ENCODE measurements at regions of chr20 and their contacts with region 1.

Region 1: GRCh38 chr20:4592316-4593148 is 129.2 kb upstream of the PRND start:
- DNase-seq: peak; percentile 32 to 78 (median 72)
- ATAC-seq: peak; percentile 83 to 92
- H3K4me3 ChIP-seq: no peak overlapping the region
- H3K27ac ChIP-seq: no peak overlapping the region
- H3K4me1 ChIP-seq: no peaks in the 10 kb centered on the region
- H3K27me3 ChIP-seq: no peaks in the 10 kb centered on the region

Region 2: DNA sequence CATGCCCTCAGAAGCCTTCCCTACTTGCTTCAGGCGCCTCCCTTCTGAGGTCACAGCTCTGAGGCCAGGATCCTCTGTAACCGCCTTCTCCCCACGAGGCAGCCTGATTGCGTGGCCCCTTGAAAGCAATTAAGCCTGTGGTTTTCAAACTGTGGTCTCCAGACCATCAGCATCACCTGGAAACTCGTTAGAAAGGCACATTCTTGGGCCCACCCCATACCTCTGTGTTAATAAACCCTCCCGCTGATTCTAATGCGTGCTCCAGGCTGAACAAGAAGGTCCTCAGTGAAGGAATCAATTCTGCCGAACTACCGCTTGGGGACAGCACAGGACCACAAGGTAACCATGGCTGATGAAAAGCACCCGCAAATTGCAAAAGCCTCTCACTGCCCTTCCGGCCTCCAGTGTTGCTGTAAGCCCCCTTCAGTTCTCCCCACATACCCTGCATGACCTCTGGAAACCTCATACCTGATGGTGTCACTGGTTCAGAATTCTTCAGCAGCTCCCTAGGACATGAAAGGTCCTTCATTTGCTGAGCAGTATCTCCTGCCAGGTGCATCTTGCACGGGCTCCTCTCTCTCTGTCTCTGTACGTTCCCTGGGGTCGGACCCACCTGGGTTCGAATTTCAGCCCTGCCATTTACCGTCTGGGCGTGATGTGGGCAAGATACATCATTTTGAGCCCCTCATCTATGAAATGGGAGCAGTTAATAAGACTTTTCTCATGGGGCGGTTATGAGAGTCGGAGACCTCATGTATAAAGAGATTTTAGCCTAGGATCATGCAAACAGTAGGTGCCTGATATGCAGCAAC is 483.8 kb before region 1 on chr20:
- intact Hi-C with region 1: loop called in 3 of 4 experiments (anchors 5 to 10 kb)
- DNase-seq: peak in 2 of 3 donors; percentile 67 to 77
- ATAC-seq: peak; percentile 83 to 85
- H3K4me3 ChIP-seq: no peak overlapping the region
- H3K27ac ChIP-seq: no peak overlapping the region
- H3K4me1 ChIP-seq: peaks cover 6% of the 10 kb centered on the region
- H3K27me3 ChIP-seq: no peaks in the 10 kb centered on the region

Region 3: GRCh38 chr20:4244700-4245485 is 347.6 kb before region 1 on chr20:
- intact Hi-C with region 1: loop called in 2 of 4 experiments (anchors 2 to 5 kb)
- DNase-seq: no peak
- ATAC-seq: no peak
- H3K4me3 ChIP-seq: no peak overlapping the region
- H3K27ac ChIP-seq: no peak overlapping the region
- H3K4me1 ChIP-seq: no peaks in the 10 kb centered on the region
- H3K27me3 ChIP-seq: no peaks in the 10 kb centered on the region

Region 4: DNA sequence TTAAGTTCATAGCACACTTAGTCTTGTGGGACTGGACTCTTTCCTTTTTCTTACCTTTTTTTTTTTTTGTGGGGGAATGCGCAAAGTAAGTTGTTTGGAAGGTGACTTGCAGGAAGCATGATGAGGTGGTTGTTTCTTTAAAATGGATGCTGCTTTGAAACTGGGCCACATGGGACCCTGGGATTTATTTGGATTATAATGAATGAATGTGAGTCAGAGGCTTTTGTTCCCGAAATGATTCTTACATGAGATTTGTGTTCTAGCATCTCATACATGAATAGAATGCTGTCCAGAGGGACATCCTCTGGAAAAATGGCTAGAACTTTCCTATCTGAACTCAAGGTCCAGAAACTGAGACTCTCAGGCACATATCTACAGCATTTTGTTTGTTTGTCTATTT is 340.5 kb before region 1 on chr20:
- intact Hi-C with region 1: loop called in 2 of 4 experiments (anchors 2 to 5 kb)
- DNase-seq: no peak
- ATAC-seq: no peak
- H3K4me3 ChIP-seq: no peak overlapping the region
- H3K27ac ChIP-seq: no peak overlapping the region
- H3K4me1 ChIP-seq: no peaks in the 10 kb centered on the region
- H3K27me3 ChIP-seq: no peaks in the 10 kb centered on the region

Region 5: GRCh38 chr20:4519530-4519929 is 73.0 kb before region 1 on chr20:
- intact Hi-C with region 1: no loop called
- DNase-seq: no peak
- ATAC-seq: no peak
- H3K4me3 ChIP-seq: no peak overlapping the region
- H3K27ac ChIP-seq: no peak overlapping the region
- H3K4me1 ChIP-seq: no peaks in the 10 kb centered on the region
- H3K27me3 ChIP-seq: no peaks in the 10 kb centered on the region

Region 6: DNA sequence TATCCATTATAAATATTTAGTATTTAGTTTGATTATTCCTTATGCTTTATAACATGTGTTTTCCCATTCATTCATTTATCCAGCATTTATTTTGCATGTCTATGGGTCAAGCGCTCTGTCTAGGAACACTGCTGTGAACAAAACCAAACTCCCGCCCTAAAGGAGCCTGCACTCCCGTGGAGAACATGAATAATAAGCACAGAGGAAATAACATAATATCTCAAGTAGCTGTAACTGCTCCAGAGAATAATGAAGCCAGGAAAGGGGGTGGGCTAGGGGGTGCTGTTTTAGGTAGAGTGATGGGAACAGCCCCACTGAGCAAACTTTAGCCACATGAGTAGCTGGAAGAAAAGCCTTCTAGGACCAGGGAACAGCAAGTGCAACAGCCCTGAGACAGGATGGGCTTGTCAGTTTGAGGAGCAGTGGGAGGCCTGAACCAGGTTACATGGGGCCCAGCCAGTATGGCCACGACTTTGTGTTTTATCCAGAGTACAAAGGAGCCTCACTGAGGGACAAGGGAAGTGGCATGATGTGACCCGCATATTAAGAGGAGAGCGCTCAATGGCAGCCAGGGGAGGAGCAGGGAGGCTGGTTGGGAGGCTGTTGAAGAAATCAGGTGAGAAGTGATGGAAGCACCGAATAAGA is 104.8 kb after region 1 on chr20:
- intact Hi-C with region 1: no loop called
- DNase-seq: no peak
- ATAC-seq: no peak
- H3K4me3 ChIP-seq: no peak overlapping the region
- H3K27ac ChIP-seq: no peak overlapping the region
- H3K4me1 ChIP-seq: no peaks in the 10 kb centered on the region
- H3K27me3 ChIP-seq: no peaks in the 10 kb centered on the region

Region 7: GRCh38 chr20:4766631-4767030 is 174.1 kb after region 1 on chr20:
- intact Hi-C with region 1: no loop called
- DNase-seq: peak in 1 of 3 donors; percentile 18
- ATAC-seq: no peak
- H3K4me3 ChIP-seq: no peak overlapping the region
- H3K27ac ChIP-seq: no peak overlapping the region
- H3K4me1 ChIP-seq: no peaks in the 10 kb centered on the region
- H3K27me3 ChIP-seq: no peaks in the 10 kb centered on the region

Measured in right cardiac atrium (tissue), 5 donors.